ENCODE measurements at regions of chr6 and their contacts with region 1.

Region 1: DNA sequence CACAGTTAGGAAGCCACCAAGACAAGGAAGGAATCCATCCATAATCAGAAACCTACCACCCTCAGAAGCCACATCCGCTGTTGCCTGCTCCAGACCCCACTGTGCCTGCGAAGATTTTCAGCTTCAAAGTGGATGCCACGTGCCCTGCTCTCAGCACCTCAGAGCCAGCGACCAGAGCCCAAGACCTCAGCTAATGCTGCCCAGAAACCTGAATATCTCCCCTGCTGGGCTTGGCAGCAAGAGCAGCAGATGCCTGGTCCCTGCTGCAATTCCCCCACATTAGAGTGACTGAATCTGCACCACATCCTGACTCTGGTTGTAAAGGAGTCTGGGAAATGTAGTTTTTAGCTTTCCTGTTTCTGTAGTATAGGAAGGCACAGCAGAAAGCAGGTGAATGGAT is 10.7 kb upstream of the ULBP3 start:
- DNase-seq: peak; percentile 64
- H3K4me3 ChIP-seq: no peak overlapping the region
- H3K27ac ChIP-seq: no peak overlapping the region
- H3K4me1 ChIP-seq: peaks cover 0 to 4% (median 0%) of the 10 kb centered on the region in 6 donors
- H3K27me3 ChIP-seq: peaks cover 0 to 33% (median 0%) of the 10 kb centered on the region in 7 donors
- CTCF ChIP-seq: no peak
- POLR2A ChIP-seq: no peak

Region 2: DNA sequence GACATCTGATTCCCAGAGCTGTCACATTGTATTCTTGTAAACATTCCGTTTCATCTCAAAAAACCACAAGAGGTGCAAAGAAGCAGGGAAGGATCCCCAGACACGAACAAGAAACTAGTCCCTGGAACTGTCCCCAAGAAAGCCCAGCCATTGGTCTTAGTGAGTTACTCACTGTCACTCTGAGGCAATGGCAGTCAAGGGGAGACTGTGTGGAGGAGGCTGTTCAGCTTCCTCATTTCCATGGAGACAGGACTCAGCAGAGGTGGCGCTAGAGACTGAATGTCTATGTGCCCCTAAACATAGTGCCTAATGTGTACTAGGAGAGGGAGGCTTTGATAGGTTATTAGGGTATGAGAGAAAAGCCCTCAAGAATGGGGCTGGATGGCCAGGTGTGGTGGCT is 104.8 kb before region 1 on chr6:
- intact Hi-C with region 1: no loop called
- DNase-seq: no peak
- H3K4me3 ChIP-seq: no peak overlapping the region
- H3K27ac ChIP-seq: no peak overlapping the region
- H3K4me1 ChIP-seq: no peaks in the 10 kb centered on the region
- H3K27me3 ChIP-seq: peaks cover 0 to 86% (median 25%) of the 10 kb centered on the region in 7 donors
- CTCF ChIP-seq: no peak
- POLR2A ChIP-seq: no peak

Region 3: DNA sequence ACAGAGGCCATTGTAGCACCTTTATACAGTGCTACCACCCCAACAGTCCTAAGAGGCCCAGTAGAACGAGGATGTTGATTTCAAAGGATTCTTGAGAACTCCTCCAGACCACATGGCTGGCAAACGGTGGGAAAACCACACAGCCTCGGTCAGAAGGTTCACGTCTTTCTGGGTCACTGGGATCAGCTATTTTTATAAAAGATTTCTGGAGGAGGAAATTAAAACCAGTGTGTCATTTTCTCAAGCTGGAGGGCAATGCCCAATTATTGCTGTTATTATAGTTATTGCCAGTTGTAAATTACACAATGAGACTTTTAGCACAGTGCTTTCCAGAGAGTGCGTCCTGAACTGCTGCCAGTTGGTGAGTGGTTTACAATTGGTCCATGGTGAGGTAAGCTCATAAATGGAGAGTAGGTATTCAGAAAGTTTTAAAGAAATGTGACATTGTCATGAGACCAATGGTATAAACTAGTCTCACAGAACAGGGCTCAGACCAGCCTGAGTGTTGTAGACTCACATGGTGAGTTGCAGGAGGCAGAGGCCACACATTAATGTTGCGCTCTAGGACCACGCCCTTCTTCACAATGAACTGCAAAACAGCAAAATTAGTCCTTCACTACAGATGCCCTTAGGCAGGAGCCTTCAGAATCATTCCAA is 54.8 kb after region 1 on chr6:
- intact Hi-C with region 1: no loop called
- DNase-seq: no peak
- H3K4me3 ChIP-seq: no peak overlapping the region
- H3K27ac ChIP-seq: no peak overlapping the region
- H3K4me1 ChIP-seq: no peaks in the 10 kb centered on the region
- H3K27me3 ChIP-seq: peaks cover 0 to 21% (median 0%) of the 10 kb centered on the region in 7 donors
- CTCF ChIP-seq: no peak
- POLR2A ChIP-seq: no peak

Region 4: GRCh38 chr6:150334790-150335783 is 255.5 kb after region 1 on chr6:
- intact Hi-C with region 1: loop called (anchors 2 kb)
- DNase-seq: no peak
- H3K4me3 ChIP-seq: no peak overlapping the region
- H3K27ac ChIP-seq: no peak overlapping the region
- H3K4me1 ChIP-seq: no peaks in the 10 kb centered on the region
- H3K27me3 ChIP-seq: peaks cover 0 to 8% (median 0%) of the 10 kb centered on the region in 7 donors
- CTCF ChIP-seq: peak; percentile 60 to 84 (median 75)
- POLR2A ChIP-seq: no peak

Region 5: DNA sequence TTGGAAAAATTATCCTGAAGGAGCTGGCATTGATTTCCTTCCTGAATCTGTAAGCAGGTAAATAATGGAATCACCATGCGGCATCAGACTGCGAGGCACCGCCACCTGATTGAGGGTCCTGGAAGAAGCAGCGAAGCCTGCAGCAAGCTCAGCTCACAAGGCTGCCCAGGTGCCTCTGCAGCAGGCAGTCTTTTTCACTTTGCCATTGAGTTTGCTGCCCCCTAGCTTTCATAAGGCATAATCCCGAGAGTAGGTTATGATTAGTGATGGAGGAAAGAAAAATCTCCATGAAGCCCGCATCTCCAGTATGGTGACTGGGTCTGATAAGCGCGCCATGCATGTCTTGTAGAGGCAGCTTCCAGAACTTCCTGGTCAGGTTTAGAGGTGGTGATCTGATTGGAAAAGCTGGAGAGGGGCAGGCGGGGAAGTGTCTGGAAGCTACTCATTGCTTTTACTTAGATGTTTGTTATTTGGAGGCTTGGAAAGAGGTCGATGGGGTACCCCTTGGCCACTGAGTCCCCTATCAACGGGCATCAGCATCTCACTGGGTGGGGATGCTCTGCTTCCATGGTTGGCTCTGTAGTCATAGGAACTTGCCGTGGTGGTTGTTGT is 315.9 kb after region 1 on chr6:
- intact Hi-C with region 1: loop called (anchors 5 kb)
- DNase-seq: no peak
- H3K4me3 ChIP-seq: no peak overlapping the region
- H3K27ac ChIP-seq: no peak overlapping the region
- H3K4me1 ChIP-seq: no peaks in the 10 kb centered on the region
- H3K27me3 ChIP-seq: no peaks in the 10 kb centered on the region
- CTCF ChIP-seq: peak in 10 of 11 experiments; percentile 47 to 77 (median 70)
- POLR2A ChIP-seq: no peak